Cardiac septum (tissue), 1 donor: ENCODE measurements at regions of chr5 and their contacts with region 1.

Region 1: GRCh38 chr5:142869883-142870282 is 99.7 kb downstream of the ARHGAP26 start:
- DNase-seq: no peak

Region 2: GRCh38 chr5:142492781-142493281 is 377.1 kb before region 1 on chr5:
- intact Hi-C with region 1: no loop called
- DNase-seq: no peak

Region 3: DNA sequence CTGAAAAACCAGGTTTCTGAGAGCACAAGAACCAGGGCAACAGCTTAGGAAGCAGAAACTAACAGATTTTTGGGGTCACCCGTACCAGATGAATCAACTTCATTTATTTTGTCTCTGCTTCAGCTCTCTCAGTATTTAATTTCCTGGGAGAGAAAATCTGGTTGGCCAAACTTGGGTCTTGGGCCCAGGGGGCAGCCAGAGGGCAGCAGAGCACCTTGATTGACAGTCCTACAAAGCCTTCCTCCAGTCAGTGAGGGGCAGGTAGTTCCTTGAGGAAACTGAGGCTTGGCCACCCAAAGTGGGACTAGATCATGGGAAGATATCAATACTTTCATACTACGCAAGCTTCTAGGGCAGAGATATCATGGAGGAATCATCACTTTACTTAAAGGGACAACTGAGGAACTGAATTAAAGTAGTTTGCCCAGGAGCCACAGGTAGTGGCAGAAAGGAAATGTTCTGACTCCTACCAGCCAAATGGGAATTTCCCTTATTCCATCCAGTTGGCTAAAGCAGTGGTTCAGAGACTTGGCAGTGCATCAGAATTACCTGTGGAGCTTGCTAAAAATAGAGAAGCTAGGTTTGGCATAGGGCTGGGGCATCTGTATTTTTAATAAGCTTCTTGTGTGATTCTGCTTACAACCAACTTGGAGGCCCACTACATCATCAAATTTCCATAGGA is 121.2 kb before region 1 on chr5:
- intact Hi-C with region 1: loop called (anchors 5 kb)
- DNase-seq: no peak

Region 4: GRCh38 chr5:142769741-142770631 is 99.9 kb before region 1 on chr5 and contains the start of gene ARHGAP26:
- intact Hi-C with region 1: loop called (anchors 2 kb)
- DNase-seq: peak; percentile 100
- total RNA-seq, gene ARHGAP26: 32.0 TPM

Region 5: DNA sequence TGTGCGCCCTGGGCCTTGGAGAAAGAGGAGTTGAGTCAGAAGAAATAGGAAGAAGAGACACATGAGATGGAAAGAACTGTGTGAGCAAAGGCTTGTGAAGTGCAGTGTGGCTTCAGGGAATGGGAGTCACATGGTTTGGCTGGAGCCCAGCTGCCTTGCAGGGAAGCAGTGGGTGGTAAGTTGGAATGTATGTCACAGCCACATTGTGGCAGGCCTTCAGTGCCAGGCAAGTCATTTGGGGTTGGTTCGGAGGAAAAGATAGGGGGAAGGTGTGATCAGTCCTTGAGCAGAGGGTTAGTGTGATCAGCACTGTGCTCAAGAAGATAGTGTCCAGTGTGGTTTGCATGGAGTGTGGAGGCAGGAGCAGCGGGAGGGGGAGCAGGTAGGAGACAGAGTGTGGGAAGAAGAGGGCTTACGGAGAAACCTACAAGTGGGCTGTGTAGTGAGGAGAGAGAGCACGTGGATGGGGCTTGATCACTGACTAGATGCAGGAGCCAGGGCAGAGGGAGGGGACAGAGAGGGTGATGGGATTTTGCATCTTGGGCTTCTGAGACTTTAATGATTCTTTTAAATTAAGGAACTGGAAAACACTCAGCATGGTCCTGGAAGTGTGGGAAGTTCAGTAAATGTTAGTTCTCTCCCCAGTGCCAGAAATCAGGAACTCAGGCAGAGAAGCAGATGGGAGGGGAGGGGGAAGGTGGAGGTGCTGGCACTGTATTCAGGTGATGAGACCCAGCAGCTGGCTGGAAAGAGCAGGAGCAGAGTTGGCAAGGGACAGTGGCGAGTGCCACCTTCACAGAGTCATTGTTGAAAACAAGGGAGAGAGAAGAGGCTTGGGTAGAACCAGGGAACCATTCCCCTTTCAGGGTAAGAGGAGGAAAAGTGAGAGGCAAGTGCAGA is 53.1 kb before region 1 on chr5:
- intact Hi-C with region 1: loop called (anchors 10 kb)
- DNase-seq: peak; percentile 80